PC-9 (cell line): ENCODE measurements at regions of chr5 and their contacts with region 1.

Region 1: GRCh38 chr5:177478711-177479646 is 5.5 kb upstream of the DBN1 start:
- DNase-seq: no peak
- H3K4me3 ChIP-seq: no peak overlapping the region
- H3K27ac ChIP-seq: no peak overlapping the region
- H3K4me1 ChIP-seq: no peaks in the 10 kb centered on the region
- H3K27me3 ChIP-seq: no peaks in the 10 kb centered on the region
- CTCF ChIP-seq: no peak

Region 2: DNA sequence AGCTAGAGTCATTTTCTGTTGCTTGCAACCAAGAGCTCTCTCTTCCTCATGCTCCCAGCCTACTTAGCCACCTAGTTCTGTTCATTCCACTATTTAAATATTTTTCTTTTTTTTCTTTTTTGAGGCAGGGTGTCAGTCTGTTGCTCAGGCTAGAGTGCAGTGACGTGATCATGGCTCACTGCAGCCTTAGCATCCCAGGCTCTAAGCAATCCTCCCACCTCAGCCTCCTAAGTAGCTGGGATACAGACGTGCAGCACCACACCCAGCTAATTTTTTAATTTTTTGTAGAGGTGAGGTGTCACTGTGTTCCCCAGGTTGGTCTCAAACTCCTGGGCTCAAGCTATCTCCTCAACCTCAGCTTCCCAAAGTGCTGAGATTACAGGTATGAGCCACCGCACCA is 64.5 kb before region 1 on chr5:
- CTCF ChIA-PET with region 1: no interaction called
- POLR2A ChIA-PET with region 1: interaction called, 22 read pairs
- intact Hi-C with region 1: no loop called
- DNase-seq: no peak
- H3K4me3 ChIP-seq: no peak overlapping the region
- H3K27ac ChIP-seq: no peak overlapping the region
- H3K4me1 ChIP-seq: 0 out of 2 replicates have a peak, but pooled peaks cover 4% of the 10 kb centered on the region
- H3K27me3 ChIP-seq: no peaks in the 10 kb centered on the region
- CTCF ChIP-seq: no peak

Region 3: DNA sequence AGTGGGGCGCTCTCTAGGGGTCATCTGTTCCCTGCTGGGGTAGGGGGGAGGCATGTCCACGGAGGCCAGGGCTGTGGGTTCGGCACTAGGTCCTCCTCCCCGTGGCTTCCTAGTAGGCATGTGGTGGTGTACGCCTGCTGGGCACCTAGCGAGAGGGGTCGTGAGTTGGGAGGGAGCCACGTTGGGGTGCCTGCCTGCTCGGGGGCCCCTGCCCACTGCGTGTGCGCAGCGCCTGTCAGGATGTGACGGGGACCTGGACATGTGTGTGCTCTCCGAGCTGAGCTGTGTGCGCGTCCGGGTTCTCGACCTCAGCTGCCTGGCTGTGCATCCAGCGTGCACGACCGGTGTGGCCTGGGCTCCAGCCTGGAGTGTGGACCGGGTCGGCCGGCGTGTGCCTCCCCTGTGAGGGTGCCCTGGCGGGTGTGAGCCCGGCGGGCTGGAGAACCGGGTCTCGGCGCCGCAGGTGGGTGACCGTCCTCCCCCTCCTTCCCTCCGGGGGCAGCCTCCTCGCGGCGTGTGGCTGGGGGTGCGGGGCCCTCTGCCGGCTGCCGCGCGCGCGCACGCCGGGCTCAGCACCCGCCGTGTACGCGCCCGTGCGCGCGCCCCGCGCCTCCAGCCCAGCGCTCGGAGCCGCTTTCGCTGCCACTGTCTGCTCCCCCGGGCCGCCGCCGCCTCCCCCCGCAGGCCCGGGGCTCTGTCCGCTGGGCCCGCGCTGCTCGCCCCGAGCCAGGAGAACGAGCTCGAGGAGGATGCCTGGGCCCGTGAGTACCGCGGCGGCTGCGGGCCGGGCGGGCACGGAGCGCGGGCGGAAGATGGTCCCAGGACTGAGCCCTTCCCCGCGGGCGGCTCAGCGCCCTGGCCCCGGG is 32.5 kb before region 1 on chr5 and contains the start of gene PRR7:
- CTCF ChIA-PET with region 1: no interaction called
- POLR2A ChIA-PET with region 1: no interaction called
- intact Hi-C with region 1: no loop called
- DNase-seq: peak in 1 of 2 experiments; percentile 73
- H3K4me3 ChIP-seq: peak within 1 kb of the TSS; percentile 68
- H3K27ac ChIP-seq: peak within 1 kb of the TSS; percentile 78
- H3K4me1 ChIP-seq: peaks cover 18% of the 10 kb centered on the region
- H3K27me3 ChIP-seq: no peaks in the 10 kb centered on the region
- CTCF ChIP-seq: no peak
- total RNA-seq, gene PRR7: 22.2 and 31.7 TPM in 2 replicates

Region 4: DNA sequence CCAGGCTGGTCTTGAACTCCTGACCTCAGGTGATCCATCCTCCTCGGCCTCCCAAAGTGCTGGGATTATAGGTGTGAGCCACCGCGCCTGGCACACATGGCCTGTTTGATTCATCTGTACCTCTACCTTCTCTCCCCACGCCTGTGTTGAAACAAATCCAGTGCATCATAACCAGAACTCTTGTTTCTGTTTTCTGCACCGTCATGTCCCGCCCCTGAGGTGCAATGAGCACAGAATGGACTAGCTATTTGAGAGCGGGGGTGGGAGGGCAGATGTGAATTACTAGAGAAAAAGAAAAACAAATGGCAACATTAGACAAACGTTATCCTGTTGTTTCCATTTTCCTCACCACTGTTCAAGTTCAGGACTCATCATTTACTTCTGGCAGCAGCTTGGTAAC is 86.1 kb after region 1 on chr5:
- CTCF ChIA-PET with region 1: no interaction called
- POLR2A ChIA-PET with region 1: no interaction called
- intact Hi-C with region 1: no loop called
- DNase-seq: no peak
- H3K4me3 ChIP-seq: no peak overlapping the region
- H3K27ac ChIP-seq: no peak overlapping the region
- H3K4me1 ChIP-seq: no peaks in the 10 kb centered on the region
- H3K27me3 ChIP-seq: peaks cover 29% of the 10 kb centered on the region
- CTCF ChIP-seq: no peak